ENCODE measurements at regions of chr15 and their contacts with region 1.

Region 1: DNA sequence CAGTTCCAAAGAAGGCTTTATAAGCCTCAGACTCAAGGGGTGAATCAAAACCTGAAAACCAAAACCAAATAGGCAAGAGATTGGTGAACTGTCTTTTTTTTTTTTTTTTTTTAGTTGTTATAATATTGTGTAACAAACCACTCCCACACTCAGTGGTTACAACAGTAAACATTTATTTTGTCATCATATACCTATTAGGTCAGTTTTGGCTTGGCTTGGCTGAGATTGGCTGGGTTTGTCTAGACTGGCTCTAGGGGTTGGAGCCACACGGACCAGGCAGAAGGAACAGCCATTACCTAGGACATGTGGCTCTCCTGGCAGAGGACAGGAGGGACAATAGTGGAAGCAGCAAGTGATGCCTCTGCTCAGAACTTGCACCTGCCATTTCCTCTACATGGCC is 26.4 kb upstream of the RYR3 start:
- DNase-seq: no peak
- ATAC-seq: no peak
- H3K4me3 Mint-ChIP-seq: no peak overlapping the region
- H3K27ac Mint-ChIP-seq: no peak overlapping the region
- H3K4me1 Mint-ChIP-seq: no peaks in the 10 kb centered on the region
- H3K27me3 Mint-ChIP-seq: no peaks in the 10 kb centered on the region

Region 2: GRCh38 chr15:33262306-33262705 is 22.0 kb before region 1 on chr15:
- CTCF ChIA-PET with region 1: no interaction called
- POLR2A ChIA-PET with region 1: no interaction called
- intact Hi-C with region 1: loop called in 1 of 2 experiments (anchors 2 kb)
- DNase-seq: no peak
- ATAC-seq: no peak
- H3K4me3 Mint-ChIP-seq: no peak overlapping the region
- H3K27ac Mint-ChIP-seq: no peak overlapping the region
- H3K4me1 Mint-ChIP-seq: no peaks in the 10 kb centered on the region
- H3K27me3 Mint-ChIP-seq: no peaks in the 10 kb centered on the region